ENCODE measurements at regions of chr6 and their contacts with region 1.

Region 1: GRCh38 chr6:77450924-77451323 is 12.4 kb downstream of the HTR1B start:
- DNase-seq: peak; percentile 46
- H3K4me3 Mint-ChIP-seq: no peak overlapping the region
- H3K27ac Mint-ChIP-seq: peak overlapping the region; percentile 12
- H3K4me1 Mint-ChIP-seq: peaks cover 12% of the 10 kb centered on the region
- H3K27me3 Mint-ChIP-seq: no peaks in the 10 kb centered on the region
- CTCF ChIP-seq: peak; percentile 58

Region 2: GRCh38 chr6:76682842-76683241 is 768.1 kb before region 1 on chr6:
- CTCF ChIA-PET with region 1: interaction called, 10 read pairs
- POLR2A ChIA-PET with region 1: no interaction called
- intact Hi-C with region 1: loop called (anchors 1 kb)
- DNase-seq: peak; percentile 32
- H3K4me3 Mint-ChIP-seq: no peak overlapping the region
- H3K27ac Mint-ChIP-seq: no peak overlapping the region
- H3K4me1 Mint-ChIP-seq: no peaks in the 10 kb centered on the region
- H3K27me3 Mint-ChIP-seq: no peaks in the 10 kb centered on the region
- CTCF ChIP-seq: peak; percentile 36

Region 3: GRCh38 chr6:76697585-76697984 is 753.3 kb before region 1 on chr6:
- CTCF ChIA-PET with region 1: no interaction called
- POLR2A ChIA-PET with region 1: interaction called, 3 read pairs
- intact Hi-C with region 1: loop called (anchors 5 kb)
- DNase-seq: peak; percentile 31
- H3K4me3 Mint-ChIP-seq: no peak overlapping the region
- H3K27ac Mint-ChIP-seq: no peak overlapping the region
- H3K4me1 Mint-ChIP-seq: peaks cover 11% of the 10 kb centered on the region
- H3K27me3 Mint-ChIP-seq: no peaks in the 10 kb centered on the region
- CTCF ChIP-seq: peak; percentile 54

Region 4: GRCh38 chr6:77021232-77021631 is 429.7 kb before region 1 on chr6:
- CTCF ChIA-PET with region 1: no interaction called
- POLR2A ChIA-PET with region 1: no interaction called
- intact Hi-C with region 1: loop called (anchors 1 kb)
- DNase-seq: no peak
- H3K4me3 Mint-ChIP-seq: peak overlapping the region; percentile 6
- H3K27ac Mint-ChIP-seq: peak overlapping the region; percentile 85
- H3K4me1 Mint-ChIP-seq: peaks cover 7% of the 10 kb centered on the region
- H3K27me3 Mint-ChIP-seq: no peaks in the 10 kb centered on the region
- CTCF ChIP-seq: no peak

Region 5: DNA sequence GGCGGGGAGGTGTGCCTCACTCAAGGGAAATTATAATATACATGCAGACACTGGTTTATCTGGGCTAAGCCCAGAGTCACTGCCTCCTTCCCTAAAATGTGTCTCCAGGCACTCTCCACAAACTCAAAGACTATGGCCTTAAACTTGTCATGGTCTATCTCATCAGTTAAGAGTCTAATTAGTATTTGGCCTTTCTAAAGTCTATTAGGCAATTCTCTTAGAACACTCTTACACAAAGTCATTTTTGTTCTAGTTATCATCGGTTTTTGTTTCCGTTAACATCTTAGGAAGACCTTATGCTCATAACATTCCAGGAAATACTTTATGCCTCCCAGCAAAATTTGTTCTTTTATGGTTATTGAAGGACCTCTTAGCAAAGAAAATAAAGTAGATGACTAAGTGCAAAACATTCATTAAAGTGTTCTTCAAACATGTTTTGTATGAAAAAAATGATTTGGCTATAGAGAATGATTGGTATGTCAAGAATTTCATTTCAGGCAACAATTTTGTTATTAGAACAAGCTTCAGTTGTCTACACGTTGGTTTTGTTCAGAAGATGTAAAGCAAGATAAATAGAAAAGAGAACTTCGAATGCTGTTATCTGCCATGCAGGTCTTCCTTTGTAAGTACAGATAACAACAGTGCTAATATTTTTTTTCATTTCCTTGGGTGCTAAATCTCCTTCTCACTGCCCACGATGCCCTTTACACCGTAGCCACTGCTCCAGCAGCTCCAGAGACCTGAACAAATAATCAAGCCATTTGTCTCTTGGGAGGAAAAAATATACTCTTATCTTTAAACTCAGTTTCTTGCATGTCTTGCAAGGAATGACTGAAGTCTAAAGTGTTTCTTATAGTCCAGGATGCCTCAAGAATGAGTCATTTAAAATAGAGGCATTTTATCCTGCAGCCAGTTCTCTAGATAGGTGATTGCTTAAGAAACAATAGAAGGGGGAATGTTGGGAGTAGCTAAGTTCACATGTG is 158.1 kb before region 1 on chr6:
- CTCF ChIA-PET with region 1: no interaction called
- POLR2A ChIA-PET with region 1: no interaction called
- intact Hi-C with region 1: loop called (anchors 5 kb)
- DNase-seq: peak; percentile 83
- H3K4me3 Mint-ChIP-seq: peak overlapping the region; percentile 68
- H3K27ac Mint-ChIP-seq: peak overlapping the region; percentile 87
- H3K4me1 Mint-ChIP-seq: peaks cover 37% of the 10 kb centered on the region
- H3K27me3 Mint-ChIP-seq: no peaks in the 10 kb centered on the region
- CTCF ChIP-seq: no peak

Region 6: GRCh38 chr6:77368660-77369313 is 82.1 kb before region 1 on chr6:
- CTCF ChIA-PET with region 1: no interaction called
- POLR2A ChIA-PET with region 1: no interaction called
- intact Hi-C with region 1: loop called (anchors 5 kb)
- DNase-seq: peak; percentile 61
- H3K4me3 Mint-ChIP-seq: peak overlapping the region; percentile 93
- H3K27ac Mint-ChIP-seq: peak overlapping the region; percentile 85
- H3K4me1 Mint-ChIP-seq: peaks cover 6% of the 10 kb centered on the region
- H3K27me3 Mint-ChIP-seq: no peaks in the 10 kb centered on the region
- CTCF ChIP-seq: no peak